ENCODE measurements at regions of chr10 and their contacts with region 1.

Region 1: DNA sequence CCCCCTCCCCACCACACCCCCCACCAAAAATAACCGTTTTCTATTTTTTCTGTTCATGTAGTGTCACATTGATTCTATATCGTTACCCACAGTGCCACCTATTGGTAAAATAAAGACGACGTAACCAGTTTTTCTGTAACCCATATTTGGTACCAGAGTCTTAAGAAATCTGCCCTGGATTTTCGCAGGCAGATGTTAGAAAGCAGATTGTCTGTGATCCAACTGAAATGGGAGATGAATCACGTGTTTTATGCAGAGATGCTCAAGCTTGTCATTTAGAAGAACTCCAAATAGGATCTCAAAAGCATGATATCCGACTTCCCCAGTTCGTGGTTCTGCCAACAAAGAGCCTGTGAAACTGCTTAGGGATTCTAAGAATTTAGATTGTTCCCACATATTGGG is 261.1 kb upstream of the CSTF2T start:
- DNase-seq: peak in 6 of 9 donors; percentile 0 to 34 (median 19)
- ATAC-seq: no peak
- H3K4me3 ChIP-seq: no peak overlapping the region
- H3K4me3 Mint-ChIP-seq: no peak overlapping the region
- H3K27ac ChIP-seq: no peak overlapping the region
- H3K27ac Mint-ChIP-seq: no peak overlapping the region
- H3K4me1 ChIP-seq: no peaks in the 10 kb centered on the region
- H3K4me1 Mint-ChIP-seq: no peaks in the 10 kb centered on the region
- H3K27me3 ChIP-seq: no peaks in the 10 kb centered on the region
- H3K27me3 Mint-ChIP-seq: peaks cover 8 to 34% (median 21%) of the 10 kb centered on the region in 5 donors

Region 2: DNA sequence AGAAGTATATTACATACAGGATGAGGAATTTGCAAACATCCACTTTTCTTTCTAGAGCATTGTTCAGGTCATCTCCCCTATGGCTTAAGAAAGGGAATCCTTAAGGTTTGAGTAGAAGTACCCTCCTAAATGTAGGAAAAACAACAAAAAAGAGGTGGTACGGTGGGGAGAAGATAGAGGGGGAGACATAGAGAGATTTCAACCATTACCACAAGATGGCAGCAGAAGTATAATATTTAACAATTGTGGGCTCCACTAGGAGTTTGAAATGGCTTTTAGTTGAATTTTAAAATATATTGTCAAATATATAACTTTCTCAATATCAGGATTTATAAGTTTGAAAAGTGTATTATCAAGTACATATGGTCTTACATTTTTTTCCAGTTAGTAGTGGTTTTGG is 958.9 kb before region 1 on chr10:
- CTCF ChIA-PET with region 1: interaction called, 6 read pairs
- POLR2A ChIA-PET with region 1: no interaction called
- intact Hi-C with region 1: loop called in 1 of 2 experiments (anchors 1 kb)
- DNase-seq: peak in 4 of 9 donors; percentile 4 to 12 (median 6)
- ATAC-seq: no peak
- H3K4me3 ChIP-seq: no peak overlapping the region
- H3K4me3 Mint-ChIP-seq: no peak overlapping the region
- H3K27ac ChIP-seq: no peak overlapping the region
- H3K27ac Mint-ChIP-seq: no peak overlapping the region
- H3K4me1 ChIP-seq: no peaks in the 10 kb centered on the region
- H3K4me1 Mint-ChIP-seq: no peaks in the 10 kb centered on the region
- H3K27me3 ChIP-seq: no peaks in the 10 kb centered on the region
- H3K27me3 Mint-ChIP-seq: peaks cover 7 to 16% (median 11%) of the 10 kb centered on the region in 5 donors

Region 3: GRCh38 chr10:51010977-51011376 is 949.5 kb before region 1 on chr10:
- CTCF ChIA-PET with region 1: interaction called, 4 read pairs
- POLR2A ChIA-PET with region 1: no interaction called
- intact Hi-C with region 1: loop called (anchors 1 to 2 kb)
- DNase-seq: peak in 3 of 9 donors; percentile 9 to 15 (median 11)
- ATAC-seq: no peak
- H3K4me3 ChIP-seq: no peak overlapping the region
- H3K4me3 Mint-ChIP-seq: no peak overlapping the region
- H3K27ac ChIP-seq: no peak overlapping the region
- H3K27ac Mint-ChIP-seq: no peak overlapping the region
- H3K4me1 ChIP-seq: no peaks in the 10 kb centered on the region
- H3K4me1 Mint-ChIP-seq: no peaks in the 10 kb centered on the region
- H3K27me3 ChIP-seq: no peaks in the 10 kb centered on the region
- H3K27me3 Mint-ChIP-seq: peaks cover 5 to 20% (median 9%) of the 10 kb centered on the region in 5 donors

Region 4: DNA sequence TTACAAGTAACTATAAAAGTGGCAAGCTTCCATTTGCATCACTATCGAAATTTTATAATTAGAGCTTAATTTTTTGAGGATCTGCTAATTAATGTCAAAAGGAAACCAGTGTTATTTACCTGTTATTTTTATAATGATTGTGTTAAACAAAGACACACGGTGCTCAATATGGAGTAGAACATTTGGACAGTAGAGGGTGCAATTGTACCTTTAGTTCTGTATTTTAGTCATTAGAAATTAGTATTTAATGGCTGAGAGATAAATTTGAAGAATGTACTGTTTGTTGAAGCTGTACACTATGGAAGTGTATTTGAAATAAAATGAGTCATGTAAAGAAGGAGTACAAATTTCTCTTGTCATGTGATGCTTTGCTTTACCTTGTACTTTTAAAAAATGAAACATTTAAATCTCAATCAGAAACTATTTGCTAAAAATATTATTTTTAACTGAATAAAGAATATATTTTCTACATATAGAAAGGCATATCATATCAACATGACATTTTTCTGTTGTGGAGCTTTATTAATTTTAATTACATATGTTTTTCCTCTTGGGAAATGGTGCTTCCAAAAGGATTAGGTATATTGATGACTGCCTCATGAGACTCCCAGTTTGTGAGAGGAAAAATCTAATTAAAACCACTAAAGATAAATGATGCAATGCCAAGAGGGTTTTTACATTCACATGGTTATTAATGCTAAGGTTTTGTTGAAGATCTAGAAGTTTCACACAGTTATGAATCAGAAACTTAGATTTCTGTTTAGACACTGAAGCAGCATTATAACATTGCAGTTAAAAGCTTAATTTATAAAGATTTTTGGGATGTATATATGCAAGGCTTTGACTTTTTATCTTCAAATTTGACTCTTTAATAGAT is 896.6 kb before region 1 on chr10:
- CTCF ChIA-PET with region 1: interaction called, 3 read pairs
- POLR2A ChIA-PET with region 1: no interaction called
- intact Hi-C with region 1: loop called in 1 of 2 experiments (anchors 2 kb)
- DNase-seq: no peak
- ATAC-seq: no peak
- H3K4me3 ChIP-seq: no peak overlapping the region
- H3K4me3 Mint-ChIP-seq: no peak overlapping the region
- H3K27ac ChIP-seq: no peak overlapping the region
- H3K27ac Mint-ChIP-seq: no peak overlapping the region
- H3K4me1 ChIP-seq: no peaks in the 10 kb centered on the region
- H3K4me1 Mint-ChIP-seq: peaks cover 0 to 1% (median 0%) of the 10 kb centered on the region in 7 donors
- H3K27me3 ChIP-seq: no peaks in the 10 kb centered on the region
- H3K27me3 Mint-ChIP-seq: peaks cover 0 to 8% (median 2%) of the 10 kb centered on the region in 5 donors

Region 5: GRCh38 chr10:51389415-51390321 is 570.8 kb before region 1 on chr10:
- CTCF ChIA-PET with region 1: interaction called, 17 read pairs
- POLR2A ChIA-PET with region 1: no interaction called
- intact Hi-C with region 1: loop called in 1 of 2 experiments (anchors 1 kb)
- DNase-seq: peak in 6 of 9 donors; percentile 1 to 38 (median 10)
- ATAC-seq: no peak
- H3K4me3 ChIP-seq: no peak overlapping the region
- H3K4me3 Mint-ChIP-seq: no peak overlapping the region
- H3K27ac ChIP-seq: no peak overlapping the region
- H3K27ac Mint-ChIP-seq: no peak overlapping the region
- H3K4me1 ChIP-seq: no peaks in the 10 kb centered on the region
- H3K4me1 Mint-ChIP-seq: no peaks in the 10 kb centered on the region
- H3K27me3 ChIP-seq: no peaks in the 10 kb centered on the region
- H3K27me3 Mint-ChIP-seq: peaks cover 0 to 1% (median 0%) of the 10 kb centered on the region in 5 donors

Region 6: DNA sequence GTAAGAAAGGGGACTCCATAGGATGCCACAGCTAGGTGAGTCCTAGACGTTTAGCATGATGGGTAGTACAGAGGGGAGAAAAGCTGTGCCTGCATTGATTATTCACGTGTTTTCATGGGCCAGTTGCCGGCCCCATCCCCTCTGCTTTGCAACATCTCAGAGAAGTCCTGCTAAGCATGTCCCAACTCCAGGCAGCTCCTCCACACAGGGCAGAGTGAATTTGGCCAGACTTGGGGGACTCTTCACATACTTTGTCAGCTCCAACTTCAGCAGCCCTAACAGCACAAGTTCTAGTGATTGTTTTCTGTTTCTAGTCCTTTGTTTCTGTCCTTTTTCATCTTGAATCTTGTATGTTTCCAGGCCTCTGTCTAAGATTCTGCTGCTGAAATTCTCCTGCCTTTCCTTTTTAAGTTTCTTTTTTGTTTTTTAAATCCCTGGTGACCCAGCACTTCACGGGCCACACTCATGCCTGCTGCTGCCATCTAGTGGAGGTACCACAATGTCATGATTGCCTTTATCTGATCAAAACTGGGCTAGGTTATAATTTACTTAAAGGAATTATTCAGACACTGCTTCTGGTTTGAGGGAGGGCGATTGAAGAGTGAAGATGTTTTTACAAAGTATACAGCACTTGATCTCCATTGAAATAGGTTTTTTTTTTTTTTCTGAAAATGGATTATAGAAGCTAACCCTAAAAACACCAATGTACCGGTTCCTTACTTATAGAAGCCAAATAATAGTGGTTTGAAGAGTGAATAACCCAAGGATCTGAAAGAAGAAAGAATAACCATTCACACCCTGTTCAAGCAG is 538.0 kb before region 1 on chr10:
- CTCF ChIA-PET with region 1: interaction called, 3 read pairs
- POLR2A ChIA-PET with region 1: no interaction called
- intact Hi-C with region 1: loop called in 1 of 2 experiments (anchors 1 kb)
- DNase-seq: peak in 1 of 9 donors; percentile 9
- ATAC-seq: no peak
- H3K4me3 ChIP-seq: no peak overlapping the region
- H3K4me3 Mint-ChIP-seq: no peak overlapping the region
- H3K27ac ChIP-seq: no peak overlapping the region
- H3K27ac Mint-ChIP-seq: no peak overlapping the region
- H3K4me1 ChIP-seq: no peaks in the 10 kb centered on the region
- H3K4me1 Mint-ChIP-seq: peaks cover 0 to 5% (median 0%) of the 10 kb centered on the region in 7 donors
- H3K27me3 ChIP-seq: no peaks in the 10 kb centered on the region
- H3K27me3 Mint-ChIP-seq: peaks cover 0 to 17% (median 4%) of the 10 kb centered on the region in 5 donors

Region 7: DNA sequence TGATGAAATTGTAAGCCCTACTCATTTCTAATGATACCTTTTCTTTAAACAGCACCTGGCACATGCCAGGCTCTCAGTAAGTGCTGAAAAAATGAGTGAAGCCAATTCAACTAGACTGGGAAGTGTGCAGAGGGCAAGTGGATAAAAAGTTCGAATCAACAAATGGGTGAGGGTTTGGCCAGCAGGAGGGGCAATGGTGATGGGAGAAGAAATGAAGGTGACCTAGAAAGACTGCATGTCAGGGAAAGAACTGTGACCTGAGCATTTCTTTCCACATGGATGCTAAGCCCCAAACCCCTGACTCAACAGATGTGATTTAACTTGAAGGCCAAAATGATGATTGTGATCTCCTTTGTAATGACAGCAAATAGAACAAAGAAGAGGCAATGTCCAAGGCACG is 408.2 kb after region 1 on chr10:
- CTCF ChIA-PET with region 1: no interaction called
- POLR2A ChIA-PET with region 1: no interaction called
- intact Hi-C with region 1: no loop called
- DNase-seq: no peak
- ATAC-seq: no peak
- H3K4me3 ChIP-seq: no peak overlapping the region
- H3K4me3 Mint-ChIP-seq: no peak overlapping the region
- H3K27ac ChIP-seq: no peak overlapping the region
- H3K27ac Mint-ChIP-seq: no peak overlapping the region
- H3K4me1 ChIP-seq: no peaks in the 10 kb centered on the region
- H3K4me1 Mint-ChIP-seq: peaks cover 0 to under 1% (median 0%) of the 10 kb centered on the region in 7 donors
- H3K27me3 ChIP-seq: no peaks in the 10 kb centered on the region
- H3K27me3 Mint-ChIP-seq: no peaks in the 10 kb centered on the region

Measured in naive thymus-derived CD4-positive, alpha-beta T cell (primary cell).